MCF 10A (cell line): ENCODE measurements at regions of chr17 and their contacts with region 1.

Region 1: DNA sequence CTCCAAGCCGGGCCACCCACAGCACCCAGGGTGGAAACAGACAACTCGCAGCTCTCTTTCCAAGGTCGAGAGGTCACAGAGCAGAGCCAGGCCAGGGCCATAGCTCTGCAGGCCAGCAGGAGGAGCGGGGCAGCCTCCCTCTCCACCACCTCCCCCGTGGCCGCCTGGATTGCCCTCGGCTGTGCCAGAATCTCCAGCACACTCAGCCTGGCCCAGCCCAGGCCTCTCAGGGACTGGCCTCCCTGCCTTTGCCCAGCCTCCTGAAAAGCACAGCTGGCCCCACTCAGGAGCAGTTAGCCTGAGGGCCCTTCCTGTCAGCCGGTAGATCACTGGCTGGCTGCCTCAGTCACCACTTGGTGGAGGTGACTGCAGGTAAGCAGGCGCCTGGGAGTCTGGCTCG is 85.8 kb upstream of the SEC14L1 start:
- DNase-seq: no peak
- H3K4me3 Mint-ChIP-seq: no peak overlapping the region
- H3K27ac Mint-ChIP-seq: no peak overlapping the region
- H3K4me1 Mint-ChIP-seq: peaks cover 6% of the 10 kb centered on the region
- H3K27me3 Mint-ChIP-seq: peaks cover 20% of the 10 kb centered on the region
- CTCF ChIP-seq: no peak

Region 2: GRCh38 chr17:76843703-76844484 is 211.0 kb before region 1 on chr17:
- CTCF ChIA-PET with region 1: interaction called, 11 read pairs
- POLR2A ChIA-PET with region 1: no interaction called
- intact Hi-C with region 1: no loop called
- DNase-seq: no peak
- H3K4me3 Mint-ChIP-seq: no peak overlapping the region
- H3K27ac Mint-ChIP-seq: no peak overlapping the region
- H3K4me1 Mint-ChIP-seq: peaks cover 9% of the 10 kb centered on the region
- H3K27me3 Mint-ChIP-seq: peaks cover 67% of the 10 kb centered on the region
- CTCF ChIP-seq: no peak

Region 3: DNA sequence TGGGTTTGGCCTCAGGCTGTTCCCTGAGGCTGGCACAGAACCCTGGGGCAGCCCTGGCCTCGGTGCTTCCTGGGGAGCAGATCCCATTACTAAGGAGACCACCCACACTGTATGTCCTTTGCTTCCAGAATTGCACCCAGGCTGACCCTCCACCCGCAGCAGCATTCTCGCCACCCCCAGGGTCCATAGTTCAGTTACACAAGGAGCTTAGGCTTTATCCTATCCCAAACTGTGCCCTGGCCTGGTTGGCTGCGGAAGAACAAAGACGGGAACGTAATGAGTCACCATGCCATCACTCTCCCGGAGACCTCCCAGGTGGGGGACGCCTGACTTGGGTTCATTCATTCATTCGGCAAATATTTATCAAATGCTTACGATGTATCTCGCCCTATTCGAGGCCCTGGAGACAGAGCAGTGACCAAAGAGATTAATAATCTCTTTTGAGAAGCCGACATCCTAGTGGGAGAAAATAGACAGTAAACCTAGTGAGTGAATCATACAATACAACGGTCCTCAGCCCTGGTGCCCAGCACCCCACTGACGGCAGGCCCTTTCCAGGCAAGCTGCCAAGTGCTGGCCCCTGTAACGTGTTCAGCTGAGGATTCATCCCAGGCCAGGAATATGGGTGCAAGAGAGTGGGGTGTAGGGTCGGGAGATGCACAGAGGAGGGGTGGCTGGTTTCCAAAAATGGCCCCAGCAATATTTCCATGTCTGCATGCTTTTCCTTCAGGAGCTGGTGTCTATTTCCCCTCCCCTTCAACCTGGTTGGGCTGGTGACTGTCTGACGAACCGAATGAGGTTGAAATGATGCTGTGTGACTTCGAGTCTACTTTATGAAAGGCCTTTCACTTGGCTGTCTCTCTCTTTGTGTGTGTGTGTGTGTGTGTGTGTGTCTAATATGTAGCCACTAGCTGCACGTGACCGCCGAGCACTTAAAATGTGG is 52.6 kb before region 1 on chr17:
- CTCF ChIA-PET with region 1: interaction called, 16 read pairs
- POLR2A ChIA-PET with region 1: no interaction called
- intact Hi-C with region 1: no loop called
- DNase-seq: peak; percentile 84
- H3K4me3 Mint-ChIP-seq: no peak overlapping the region
- H3K27ac Mint-ChIP-seq: no peak overlapping the region
- H3K4me1 Mint-ChIP-seq: peaks cover 7% of the 10 kb centered on the region
- H3K27me3 Mint-ChIP-seq: peaks cover 32% of the 10 kb centered on the region
- CTCF ChIP-seq: no peak

Region 4: GRCh38 chr17:77019955-77020379 is 35.0 kb before region 1 on chr17:
- CTCF ChIA-PET with region 1: interaction called, 17 read pairs
- POLR2A ChIA-PET with region 1: no interaction called
- intact Hi-C with region 1: no loop called
- DNase-seq: no peak
- H3K4me3 Mint-ChIP-seq: no peak overlapping the region
- H3K27ac Mint-ChIP-seq: no peak overlapping the region
- H3K4me1 Mint-ChIP-seq: no peaks in the 10 kb centered on the region
- H3K27me3 Mint-ChIP-seq: no peaks in the 10 kb centered on the region
- CTCF ChIP-seq: no peak

Region 5: DNA sequence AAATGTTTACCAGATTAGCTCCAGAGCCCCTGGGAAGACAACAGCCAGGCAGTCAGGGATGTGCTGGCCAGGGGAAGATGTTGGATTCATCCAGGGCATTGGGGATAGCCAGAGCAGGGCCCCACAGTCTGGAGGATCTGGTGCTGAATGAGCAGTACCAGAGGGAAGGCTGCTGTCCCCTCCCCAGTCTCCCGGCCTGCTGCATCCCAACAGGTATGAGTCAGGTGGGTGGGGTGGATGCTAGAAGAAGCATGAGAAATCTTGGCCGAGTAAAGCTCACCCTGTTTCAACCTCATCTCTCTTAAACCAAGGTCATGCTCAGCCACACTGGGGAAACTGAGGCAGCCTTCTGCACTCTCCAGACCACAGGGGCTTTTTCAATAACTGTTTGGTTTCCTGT is 14.0 kb after region 1 on chr17:
- CTCF ChIA-PET with region 1: interaction called, 53 read pairs
- POLR2A ChIA-PET with region 1: no interaction called
- intact Hi-C with region 1: no loop called
- DNase-seq: no peak
- H3K4me3 Mint-ChIP-seq: no peak overlapping the region
- H3K27ac Mint-ChIP-seq: no peak overlapping the region
- H3K4me1 Mint-ChIP-seq: no peaks in the 10 kb centered on the region
- H3K27me3 Mint-ChIP-seq: peaks cover 62% of the 10 kb centered on the region
- CTCF ChIP-seq: no peak

Region 6: GRCh38 chr17:77127735-77128361 is 72.9 kb after region 1 on chr17:
- CTCF ChIA-PET with region 1: no interaction called
- POLR2A ChIA-PET with region 1: no interaction called
- intact Hi-C with region 1: no loop called
- DNase-seq: peak; percentile 93
- H3K4me3 Mint-ChIP-seq: peak overlapping the region; percentile 55
- H3K27ac Mint-ChIP-seq: peak overlapping the region; percentile 46
- H3K4me1 Mint-ChIP-seq: peaks cover 40% of the 10 kb centered on the region
- H3K27me3 Mint-ChIP-seq: no peaks in the 10 kb centered on the region
- CTCF ChIP-seq: no peak